Activated T-helper 1 cell treated with anti-CD3 and anti-CD28 coated beads, Interleukin-12 subunit alpha, Interleukin-12 subunit beta, Interleukin-2, Interleukin-4 antibody, amounts not matched to agents 30 ng/mL and 10 ng/mL and 1 ng/mL, durations not matched to agents 14 hours and 24 hours and 36 hours (primary cell): ENCODE measurements at regions of chr15 and their contacts with region 1.

Region 1: GRCh38 chr15:89416141-89416853 is 80.1 kb downstream of the RHCG start:
- DNase-seq: peak; percentile 64
- H3K4me3 Mint-ChIP-seq: no peak overlapping the region
- H3K27ac Mint-ChIP-seq: no peak overlapping the region
- H3K4me1 Mint-ChIP-seq: peaks cover 10% of the 10 kb centered on the region
- H3K27me3 Mint-ChIP-seq: peaks cover 75% of the 10 kb centered on the region

Region 2: DNA sequence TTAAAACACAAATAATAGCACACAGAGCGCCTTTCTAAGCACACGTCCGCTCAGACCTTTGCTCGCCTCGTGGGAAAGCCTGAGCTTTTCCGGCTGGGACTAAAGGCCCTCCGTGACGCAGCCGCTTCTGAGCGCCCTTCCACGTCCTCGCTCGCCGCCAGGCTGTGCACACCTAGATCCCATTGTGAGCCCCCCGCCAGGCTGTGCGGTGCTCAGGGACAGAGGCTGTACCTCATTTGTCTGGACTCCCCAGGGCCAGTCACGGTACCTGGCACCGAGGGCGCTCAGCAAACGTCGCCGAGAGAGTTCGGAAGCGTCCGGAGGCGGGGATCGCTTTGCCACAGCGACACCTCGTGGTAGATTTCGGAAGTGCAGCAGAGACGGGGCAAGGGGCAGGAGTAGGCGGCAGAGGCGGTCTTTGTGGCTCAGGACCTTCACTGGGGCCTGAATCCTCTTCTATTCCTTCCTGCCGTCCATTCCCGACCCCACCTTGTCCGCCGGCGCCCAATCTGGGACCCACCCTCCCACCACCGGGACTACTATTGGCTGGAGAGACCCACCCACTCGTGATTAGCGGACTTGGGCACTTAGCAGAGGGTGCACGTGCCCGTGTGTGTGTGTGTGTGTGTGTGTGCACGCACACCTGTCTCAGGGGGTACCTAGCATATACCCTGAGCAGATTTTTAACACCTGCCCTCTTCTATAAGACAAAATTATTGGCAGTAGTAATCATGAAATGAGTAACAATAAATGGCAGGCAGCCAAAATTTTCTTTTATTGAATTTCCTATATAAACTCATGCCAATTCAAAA is 14.4 kb after region 1 on chr15:
- intact Hi-C with region 1: loop called (anchors 1 kb)
- DNase-seq: peak; percentile 78
- H3K4me3 Mint-ChIP-seq: peak overlapping the region; percentile 82
- H3K27ac Mint-ChIP-seq: peak overlapping the region; percentile 2
- H3K4me1 Mint-ChIP-seq: peaks cover 7% of the 10 kb centered on the region
- H3K27me3 Mint-ChIP-seq: peaks cover 18% of the 10 kb centered on the region

Region 3: GRCh38 chr15:89472785-89473256 is 56.5 kb after region 1 on chr15:
- intact Hi-C with region 1: loop called (anchors 2 kb)
- DNase-seq: peak; percentile 33
- H3K4me3 Mint-ChIP-seq: no peak overlapping the region
- H3K27ac Mint-ChIP-seq: no peak overlapping the region
- H3K4me1 Mint-ChIP-seq: no peaks in the 10 kb centered on the region
- H3K27me3 Mint-ChIP-seq: peaks cover 24% of the 10 kb centered on the region

Region 4: GRCh38 chr15:89556413-89557262 is 140.3 kb after region 1 on chr15:
- intact Hi-C with region 1: no loop called
- DNase-seq: peak; percentile 21
- H3K4me3 Mint-ChIP-seq: no peak overlapping the region
- H3K27ac Mint-ChIP-seq: no peak overlapping the region
- H3K4me1 Mint-ChIP-seq: no peaks in the 10 kb centered on the region
- H3K27me3 Mint-ChIP-seq: peaks cover 21% of the 10 kb centered on the region

Region 5: GRCh38 chr15:89946781-89947221 is 530.5 kb after region 1 on chr15:
- intact Hi-C with region 1: no loop called
- DNase-seq: no peak
- H3K4me3 Mint-ChIP-seq: no peak overlapping the region
- H3K27ac Mint-ChIP-seq: no peak overlapping the region
- H3K4me1 Mint-ChIP-seq: no peaks in the 10 kb centered on the region
- H3K27me3 Mint-ChIP-seq: peaks cover 5% of the 10 kb centered on the region